PC-9 (cell line): ENCODE measurements at regions of chr7 and their contacts with region 1.

Region 1: DNA sequence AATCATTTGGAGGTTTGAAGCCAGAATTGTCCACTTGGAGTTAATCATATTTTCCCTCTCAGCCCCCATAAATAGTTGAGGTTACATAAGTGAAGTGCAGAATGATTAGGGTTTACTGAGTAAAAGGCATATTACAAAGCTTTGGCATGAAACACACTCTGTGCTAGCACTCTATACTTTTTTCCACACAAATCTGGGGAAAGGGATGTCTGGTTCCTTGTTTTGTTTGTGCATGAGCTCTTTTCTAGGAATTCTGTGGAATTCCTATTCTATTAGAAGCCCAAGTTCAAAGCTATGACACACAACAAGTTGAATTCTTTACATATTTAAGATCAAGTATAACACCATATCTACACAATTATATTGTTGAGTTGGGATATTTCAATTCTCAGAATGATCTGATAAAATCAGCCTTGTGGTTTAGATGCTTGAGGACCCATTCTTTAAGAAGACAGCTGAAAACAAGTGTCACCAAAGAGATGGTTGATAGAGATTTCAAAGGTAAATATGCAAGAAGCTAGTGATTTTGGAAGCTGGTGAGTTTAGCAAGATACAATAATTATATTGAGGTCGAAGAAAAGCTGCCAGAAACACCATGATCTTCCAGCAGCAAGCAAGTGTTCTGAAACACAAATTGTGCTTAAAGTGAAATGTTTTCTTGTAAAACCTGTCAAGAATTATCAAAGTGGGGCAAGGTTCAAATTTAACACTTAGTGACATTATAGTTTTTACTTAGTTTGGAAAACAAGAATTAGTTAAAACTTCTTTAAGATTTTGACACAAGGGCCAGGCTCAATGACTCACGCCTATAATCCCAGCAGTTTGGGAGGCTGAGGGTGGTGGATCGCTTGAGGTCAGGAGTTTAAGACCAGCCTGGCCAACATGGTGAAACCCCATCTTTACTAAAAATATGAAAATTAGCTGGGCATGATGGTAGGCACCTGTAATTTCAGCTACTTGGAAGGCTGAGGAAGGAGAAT is 122.6 kb downstream of the INHBA start:
- DNase-seq: peak; percentile 40 to 99
- H3K4me3 ChIP-seq: no peak overlapping the region
- H3K27ac ChIP-seq: peak overlapping the region; percentile 74
- H3K4me1 ChIP-seq: peaks cover 35% of the 10 kb centered on the region
- H3K27me3 ChIP-seq: no peaks in the 10 kb centered on the region
- CTCF ChIP-seq: no peak

Region 2: DNA sequence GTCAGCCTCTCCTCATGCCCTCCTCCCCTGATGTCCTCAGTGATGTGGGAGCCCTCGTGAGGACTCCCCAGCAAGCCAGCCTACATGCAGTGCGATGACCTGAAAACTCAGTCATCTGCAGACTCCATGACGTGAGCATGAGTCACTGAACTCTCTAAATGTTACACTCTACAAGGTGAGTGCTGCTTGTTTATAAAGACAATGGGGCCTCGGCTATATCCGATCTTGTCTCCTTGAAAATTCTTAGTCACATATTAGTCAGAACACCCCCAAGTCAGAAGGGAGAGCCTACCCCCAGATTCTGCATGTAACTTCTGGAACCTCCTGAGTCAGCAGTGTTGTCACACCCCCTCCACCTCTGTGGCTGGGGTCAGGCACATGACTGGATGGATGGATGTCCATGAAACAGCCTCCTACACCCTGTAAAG is 551.2 kb before region 1 on chr7:
- CTCF ChIA-PET with region 1: no interaction called
- POLR2A ChIA-PET with region 1: no interaction called
- intact Hi-C with region 1: loop called (anchors 1 kb)
- DNase-seq: peak; percentile 74 to 84
- H3K4me3 ChIP-seq: no peak overlapping the region
- H3K27ac ChIP-seq: peak overlapping the region; percentile 39
- H3K4me1 ChIP-seq: peaks cover 22% of the 10 kb centered on the region
- H3K27me3 ChIP-seq: no peaks in the 10 kb centered on the region
- CTCF ChIP-seq: no peak

Region 3: DNA sequence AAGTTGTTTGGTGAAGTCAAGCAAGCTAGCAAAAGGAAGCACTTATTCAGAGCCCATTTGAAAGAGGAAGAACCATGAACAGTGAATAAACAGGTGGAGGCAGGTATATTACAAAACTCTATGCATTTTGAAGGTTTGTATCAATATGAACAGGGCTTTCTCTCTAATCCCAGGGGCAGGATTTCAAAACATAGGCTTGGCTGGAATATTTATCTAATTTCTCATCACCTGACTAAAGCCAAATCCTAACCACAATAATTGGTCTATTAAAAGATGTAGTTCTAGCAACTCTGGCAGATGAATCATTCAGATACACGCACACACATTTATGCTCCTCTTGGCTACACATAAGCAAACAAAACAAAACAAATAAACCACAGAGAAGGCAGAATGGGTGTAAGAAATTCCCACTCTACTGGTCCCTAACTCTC is 431.7 kb before region 1 on chr7:
- CTCF ChIA-PET with region 1: no interaction called
- POLR2A ChIA-PET with region 1: no interaction called
- intact Hi-C with region 1: loop called (anchors 1 kb)
- DNase-seq: peak; percentile 34 to 100
- H3K4me3 ChIP-seq: no peak overlapping the region; the same call in 1 of the 2 replicates
- H3K27ac ChIP-seq: peak overlapping the region; percentile 66
- H3K4me1 ChIP-seq: peaks cover 26% of the 10 kb centered on the region
- H3K27me3 ChIP-seq: no peaks in the 10 kb centered on the region
- CTCF ChIP-seq: no peak

Region 4: DNA sequence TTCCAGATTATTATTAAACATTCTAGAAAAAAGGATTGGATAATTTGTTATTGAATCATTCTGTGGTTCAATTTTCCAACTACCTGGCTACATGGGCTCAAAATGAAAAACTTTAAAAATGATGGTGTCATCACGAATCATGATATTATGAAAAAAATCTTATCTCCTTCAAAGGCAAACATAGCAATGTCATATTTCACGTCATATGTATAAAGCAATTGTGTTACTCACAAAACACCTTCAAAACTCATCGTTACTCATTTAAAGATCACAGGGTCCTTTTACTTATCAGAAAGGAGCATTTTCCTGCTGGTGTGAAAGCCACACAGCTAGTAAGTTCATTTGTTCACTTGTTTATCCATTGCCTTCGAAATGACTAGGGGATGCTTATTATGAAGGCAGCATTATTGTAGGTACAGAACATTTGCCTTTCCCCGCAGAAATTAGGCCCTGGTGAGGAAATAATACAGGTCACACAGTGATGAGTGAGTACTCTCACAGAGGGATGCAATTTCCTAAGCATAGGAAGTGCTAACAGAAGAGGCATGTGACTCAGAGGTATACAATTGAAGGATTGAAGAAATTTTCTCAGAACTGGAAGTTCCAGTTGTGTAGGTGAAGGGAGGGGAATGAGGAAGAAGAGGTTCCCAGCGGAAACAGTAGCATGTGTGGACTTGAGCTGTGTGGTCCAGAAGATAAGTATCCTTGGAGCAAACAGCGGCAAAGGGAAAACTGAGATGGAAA is 356.0 kb before region 1 on chr7:
- CTCF ChIA-PET with region 1: no interaction called
- POLR2A ChIA-PET with region 1: no interaction called
- intact Hi-C with region 1: loop called (anchors 1 kb)
- DNase-seq: peak; percentile 54 to 100
- H3K4me3 ChIP-seq: no peak overlapping the region
- H3K27ac ChIP-seq: peak overlapping the region; percentile 73
- H3K4me1 ChIP-seq: peaks cover 23% of the 10 kb centered on the region
- H3K27me3 ChIP-seq: no peaks in the 10 kb centered on the region
- CTCF ChIP-seq: no peak

Region 5: GRCh38 chr7:41403291-41403690 is 177.0 kb before region 1 on chr7:
- CTCF ChIA-PET with region 1: no interaction called
- POLR2A ChIA-PET with region 1: no interaction called
- intact Hi-C with region 1: loop called (anchors 1 kb)
- DNase-seq: peak in 1 of 2 experiments; percentile 72
- H3K4me3 ChIP-seq: no peak overlapping the region
- H3K27ac ChIP-seq: peak overlapping the region; percentile 43
- H3K4me1 ChIP-seq: peaks cover 29% of the 10 kb centered on the region
- H3K27me3 ChIP-seq: no peaks in the 10 kb centered on the region
- CTCF ChIP-seq: no peak

Region 6: GRCh38 chr7:41559426-41559825 is 20.8 kb before region 1 on chr7:
- CTCF ChIA-PET with region 1: no interaction called
- POLR2A ChIA-PET with region 1: no interaction called
- intact Hi-C with region 1: loop called (anchors 2 kb)
- DNase-seq: peak; percentile 57 to 83
- H3K4me3 ChIP-seq: no peak overlapping the region
- H3K27ac ChIP-seq: peak overlapping the region; percentile 50
- H3K4me1 ChIP-seq: peaks cover 20% of the 10 kb centered on the region
- H3K27me3 ChIP-seq: no peaks in the 10 kb centered on the region
- CTCF ChIP-seq: no peak

Region 7: GRCh38 chr7:41674505-41675023 is 94.3 kb after region 1 on chr7:
- CTCF ChIA-PET with region 1: no interaction called
- POLR2A ChIA-PET with region 1: no interaction called
- intact Hi-C with region 1: no loop called
- DNase-seq: no peak
- H3K4me3 ChIP-seq: no peak overlapping the region
- H3K27ac ChIP-seq: no peak overlapping the region
- H3K4me1 ChIP-seq: no peaks in the 10 kb centered on the region
- H3K27me3 ChIP-seq: no peaks in the 10 kb centered on the region
- CTCF ChIP-seq: no peak